HepG2 (cell line): ENCODE measurements at regions of chr2 and their contacts with region 1.

Region 1: DNA sequence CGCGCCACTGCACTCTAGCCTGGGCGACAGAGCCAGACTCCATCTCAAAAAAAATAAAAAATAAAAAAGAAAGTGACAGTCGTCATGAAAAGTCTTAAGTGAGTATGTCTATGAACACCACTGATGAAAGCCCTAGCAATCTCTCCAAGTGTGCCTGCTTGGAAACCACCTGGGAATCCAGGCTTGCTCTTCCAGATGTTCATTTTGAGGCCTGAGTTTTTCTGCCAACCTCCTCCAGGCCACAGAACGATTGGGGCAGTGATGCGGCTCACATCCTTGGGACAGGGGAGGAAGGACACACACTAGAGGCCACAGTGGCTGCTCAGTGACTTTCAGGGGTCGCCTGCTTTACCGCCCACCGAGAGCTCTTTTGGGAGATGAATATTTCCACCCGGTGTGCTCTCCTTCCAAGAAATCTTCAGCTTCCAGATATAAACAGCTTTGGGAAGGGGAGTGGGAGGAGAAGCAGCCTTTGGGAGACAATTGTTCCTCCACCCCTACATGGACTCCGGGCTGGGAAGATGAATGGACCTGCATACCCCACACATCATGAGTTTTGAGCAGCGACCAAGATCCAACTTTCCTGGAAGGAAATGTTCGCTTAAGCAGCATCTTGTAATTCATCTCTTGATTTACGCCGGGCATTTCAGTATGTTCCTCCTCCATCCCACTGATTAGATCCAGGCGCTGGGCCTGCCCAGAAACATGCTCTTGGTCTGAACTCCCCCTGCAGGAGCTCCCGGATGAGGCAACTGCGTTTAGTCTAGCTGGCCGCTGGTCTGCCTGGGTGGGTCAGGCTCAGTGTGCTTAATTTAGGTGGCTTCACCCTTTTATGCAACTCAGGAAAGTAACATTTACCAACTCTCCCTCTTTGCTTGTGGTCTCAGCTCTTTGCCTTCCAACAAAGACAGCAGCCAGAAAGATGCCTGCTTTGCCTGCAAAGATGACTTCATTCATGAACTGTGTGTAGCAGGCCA is 6.2 kb upstream of the ARMC9 start:
- DNase-seq: peak; percentile 70
- ATAC-seq: peak; percentile 75
- H3K4me3 ChIP-seq: peak overlapping the region in 1 of 3 experiments; percentile 43; a peak in 1 of 6 replicates
- H3K27ac ChIP-seq: no peak overlapping the region
- H3K4me1 ChIP-seq: peaks cover 46% of the 10 kb centered on the region
- H3K27me3 ChIP-seq: peaks cover 0 to 1% of the 10 kb centered on the region in 2 experiments; a peak in 2 of 5 replicates
- CTCF ChIP-seq: peak; percentile 88
- EP300 ChIP-seq: no peak
- POLR2A ChIP-seq: no peak
- RAD21 ChIP-seq: peak; percentile 67

Region 2: DNA sequence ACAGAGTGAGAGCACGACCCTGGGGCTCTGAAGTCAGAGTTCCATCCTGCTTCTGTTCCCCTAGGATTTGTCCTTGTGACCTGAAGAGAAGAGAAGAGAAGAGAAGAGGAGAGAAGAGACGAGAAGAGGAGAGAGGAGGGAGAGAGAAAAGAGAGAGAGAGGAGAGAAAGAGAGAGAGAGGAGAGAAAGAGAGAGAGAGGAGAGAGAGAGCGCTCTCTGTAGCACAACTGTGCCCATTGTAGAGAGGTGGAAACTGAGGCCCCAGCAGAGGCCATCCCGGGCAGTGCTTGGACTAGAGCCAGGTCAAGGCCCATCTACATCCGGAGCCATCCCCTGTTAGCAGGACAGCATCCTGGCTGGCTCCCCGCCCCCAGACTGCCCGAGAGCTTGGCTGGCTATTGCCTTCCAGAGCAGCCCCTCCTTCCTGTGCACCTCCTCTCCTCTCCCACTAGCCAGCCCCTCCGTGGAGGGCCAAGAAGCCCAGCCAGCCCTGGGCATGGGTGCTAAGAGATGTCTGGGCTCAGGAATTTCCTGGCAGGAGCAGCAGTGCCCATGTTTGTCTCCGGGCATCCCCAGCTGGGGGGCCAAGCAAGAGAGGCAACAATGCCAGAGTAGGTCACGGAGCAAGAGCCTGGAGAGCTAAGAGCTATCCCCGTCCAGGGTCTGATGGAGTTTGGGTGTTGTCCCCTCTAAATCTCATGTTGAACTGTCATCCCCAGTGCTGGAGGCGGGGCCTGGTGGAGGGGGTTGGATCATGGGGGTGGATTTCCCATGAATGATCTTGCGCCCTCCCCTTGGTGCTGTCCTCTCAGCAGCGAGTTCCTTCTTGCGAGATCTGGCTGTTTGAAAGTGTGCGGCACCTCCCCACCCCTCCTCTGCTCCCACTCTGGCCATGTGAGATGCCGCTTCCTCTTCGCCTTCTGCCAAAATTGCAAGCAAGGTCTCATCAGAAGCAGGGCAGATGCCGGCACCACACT is 249.0 kb before region 1 on chr2:
- CTCF ChIA-PET with region 1: no interaction called
- POLR2A ChIA-PET with region 1: no interaction called
- in situ Hi-C with region 1: no loop called
- intact Hi-C with region 1: no loop called
- DNase-seq: no peak
- ATAC-seq: no peak
- H3K4me3 ChIP-seq: no peak overlapping the region
- H3K27ac ChIP-seq: no peak overlapping the region
- H3K4me1 ChIP-seq: no peaks in the 10 kb centered on the region
- H3K27me3 ChIP-seq: peaks cover 3 to 50% of the 10 kb centered on the region in 2 experiments
- CTCF ChIP-seq: no peak
- EP300 ChIP-seq: no peak
- POLR2A ChIP-seq: no peak
- RAD21 ChIP-seq: no peak

Region 3: GRCh38 chr2:231037731-231038482 is 154.3 kb before region 1 on chr2:
- CTCF ChIA-PET with region 1: no interaction called
- POLR2A ChIA-PET with region 1: no interaction called
- in situ Hi-C with region 1: no loop called
- intact Hi-C with region 1: no loop called
- DNase-seq: no peak
- ATAC-seq: peak; percentile 31
- H3K4me3 ChIP-seq: peak overlapping the region; percentile 83 to 99 (median 99)
- H3K27ac ChIP-seq: peak overlapping the region; percentile 92
- H3K4me1 ChIP-seq: peaks cover 86% of the 10 kb centered on the region
- H3K27me3 ChIP-seq: no peaks in the 10 kb centered on the region; a peak in 1 of 5 replicates
- CTCF ChIP-seq: peak; percentile 41
- EP300 ChIP-seq: no peak
- POLR2A ChIP-seq: no peak
- RAD21 ChIP-seq: peak; percentile 85

Region 4: DNA sequence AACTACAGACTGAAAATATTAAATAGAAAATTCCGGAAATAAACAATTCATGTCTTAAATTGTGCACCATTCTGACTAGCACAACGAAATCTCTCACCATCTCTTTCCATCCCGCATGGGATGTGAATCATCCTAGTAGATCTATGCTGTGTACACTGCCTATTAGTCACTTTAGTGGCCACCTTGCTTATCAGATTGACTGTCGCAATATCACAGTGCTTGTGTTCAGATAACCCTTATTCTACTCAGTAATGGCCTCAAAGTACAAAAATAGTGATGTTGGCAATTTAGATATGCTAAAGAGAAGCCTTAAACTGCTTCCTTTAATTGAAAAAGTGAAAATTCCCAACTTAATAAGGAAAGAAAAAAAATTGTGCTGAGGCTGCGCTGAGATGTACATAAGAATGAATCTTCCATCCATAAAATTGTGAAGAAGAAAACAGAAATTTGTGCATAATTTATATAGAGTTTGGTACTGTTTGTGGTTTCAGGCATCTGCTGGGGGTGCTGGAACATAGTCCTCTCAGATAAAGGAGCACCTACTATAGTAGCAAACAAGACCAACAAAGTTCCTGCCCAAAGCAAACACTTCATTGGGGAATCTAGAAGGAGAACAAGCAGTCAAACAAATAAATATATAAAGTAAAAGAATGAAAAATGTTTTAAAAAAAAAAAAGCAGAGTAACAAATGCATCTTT is 123.5 kb before region 1 on chr2:
- CTCF ChIA-PET with region 1: no interaction called
- POLR2A ChIA-PET with region 1: no interaction called
- in situ Hi-C with region 1: no loop called
- intact Hi-C with region 1: no loop called
- DNase-seq: peak; percentile 87
- ATAC-seq: peak; percentile 89
- H3K4me3 ChIP-seq: no peak overlapping the region
- H3K27ac ChIP-seq: peak overlapping the region; percentile 25
- H3K4me1 ChIP-seq: peaks cover 41% of the 10 kb centered on the region
- H3K27me3 ChIP-seq: no peaks in the 10 kb centered on the region
- CTCF ChIP-seq: no peak
- EP300 ChIP-seq: peak in 1 of 2 experiments; percentile 64; a peak in 1 of 4 replicates
- POLR2A ChIP-seq: no peak
- RAD21 ChIP-seq: no peak

Region 5: DNA sequence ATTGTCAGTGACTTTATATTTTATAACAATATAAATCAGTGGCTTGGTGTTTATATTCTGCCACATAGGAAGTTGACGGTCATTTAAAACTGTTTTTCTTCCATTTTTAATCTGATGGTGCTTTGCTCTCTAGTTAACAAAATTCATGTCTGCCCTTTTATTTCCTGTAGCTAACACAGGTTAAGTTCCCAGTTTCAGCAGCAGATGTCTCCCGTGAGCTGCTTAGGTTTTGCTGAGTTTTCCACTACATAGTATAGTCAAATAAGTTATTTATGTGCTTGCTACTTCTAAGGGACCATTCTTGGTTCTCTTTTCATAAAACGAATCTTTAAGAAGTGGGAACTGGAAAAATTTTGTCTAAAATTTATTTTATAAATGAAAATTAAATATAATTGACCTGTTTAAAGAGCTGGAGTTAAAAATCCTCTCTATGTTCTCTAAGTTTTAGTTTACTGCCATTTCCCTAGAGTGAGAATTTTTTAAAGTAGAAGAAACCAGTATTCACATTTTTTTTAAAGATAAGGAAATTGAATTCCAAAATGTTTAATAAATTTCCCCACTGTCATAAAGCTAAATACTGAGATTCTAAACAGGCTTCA is 88.0 kb before region 1 on chr2:
- CTCF ChIA-PET with region 1: interaction called, 13 read pairs
- POLR2A ChIA-PET with region 1: no interaction called
- in situ Hi-C with region 1: no loop called
- intact Hi-C with region 1: loop called (anchors 1 kb)
- DNase-seq: peak; percentile 50
- ATAC-seq: peak; percentile 82
- H3K4me3 ChIP-seq: no peak overlapping the region
- H3K27ac ChIP-seq: no peak overlapping the region
- H3K4me1 ChIP-seq: peaks cover 23% of the 10 kb centered on the region
- H3K27me3 ChIP-seq: no peaks in the 10 kb centered on the region
- CTCF ChIP-seq: peak; percentile 79
- EP300 ChIP-seq: no peak
- POLR2A ChIP-seq: no peak
- RAD21 ChIP-seq: peak; percentile 59; the same call in 1 of the 2 replicates

Region 6: GRCh38 chr2:231110551-231110950 is 81.6 kb before region 1 on chr2:
- CTCF ChIA-PET with region 1: interaction called, 3 read pairs
- POLR2A ChIA-PET with region 1: no interaction called
- in situ Hi-C with region 1: loop called (anchors 5 kb)
- intact Hi-C with region 1: no loop called
- DNase-seq: no peak
- ATAC-seq: no peak
- H3K4me3 ChIP-seq: no peak overlapping the region
- H3K27ac ChIP-seq: no peak overlapping the region
- H3K4me1 ChIP-seq: no peaks in the 10 kb centered on the region
- H3K27me3 ChIP-seq: no peaks in the 10 kb centered on the region
- CTCF ChIP-seq: no peak
- EP300 ChIP-seq: no peak
- POLR2A ChIP-seq: no peak
- RAD21 ChIP-seq: no peak